AG04449 (cell line): ENCODE measurements at regions of chr5 and their contacts with region 1.

Region 1: GRCh38 chr5:150022163-150022540 is 21.6 kb downstream of the HMGXB3 start:
- DNase-seq: no peak
- H3K4me3 ChIP-seq: no peak overlapping the region
- CTCF ChIP-seq: no peak

Region 2: GRCh38 chr5:150000256-150000989 is 21.7 kb before region 1 on chr5 and contains the starts of genes HMGXB3 and TIGD6:
- CTCF ChIA-PET with region 1: interaction called, 15 read pairs
- POLR2A ChIA-PET with region 1: interaction called, 5 read pairs
- DNase-seq: peak; percentile 57
- H3K4me3 ChIP-seq: peak within 1 kb of the TSS; percentile 98
- CTCF ChIP-seq: peak; percentile 18